ENCODE measurements at regions of chr9 and their contacts with region 1.

Region 1: DNA sequence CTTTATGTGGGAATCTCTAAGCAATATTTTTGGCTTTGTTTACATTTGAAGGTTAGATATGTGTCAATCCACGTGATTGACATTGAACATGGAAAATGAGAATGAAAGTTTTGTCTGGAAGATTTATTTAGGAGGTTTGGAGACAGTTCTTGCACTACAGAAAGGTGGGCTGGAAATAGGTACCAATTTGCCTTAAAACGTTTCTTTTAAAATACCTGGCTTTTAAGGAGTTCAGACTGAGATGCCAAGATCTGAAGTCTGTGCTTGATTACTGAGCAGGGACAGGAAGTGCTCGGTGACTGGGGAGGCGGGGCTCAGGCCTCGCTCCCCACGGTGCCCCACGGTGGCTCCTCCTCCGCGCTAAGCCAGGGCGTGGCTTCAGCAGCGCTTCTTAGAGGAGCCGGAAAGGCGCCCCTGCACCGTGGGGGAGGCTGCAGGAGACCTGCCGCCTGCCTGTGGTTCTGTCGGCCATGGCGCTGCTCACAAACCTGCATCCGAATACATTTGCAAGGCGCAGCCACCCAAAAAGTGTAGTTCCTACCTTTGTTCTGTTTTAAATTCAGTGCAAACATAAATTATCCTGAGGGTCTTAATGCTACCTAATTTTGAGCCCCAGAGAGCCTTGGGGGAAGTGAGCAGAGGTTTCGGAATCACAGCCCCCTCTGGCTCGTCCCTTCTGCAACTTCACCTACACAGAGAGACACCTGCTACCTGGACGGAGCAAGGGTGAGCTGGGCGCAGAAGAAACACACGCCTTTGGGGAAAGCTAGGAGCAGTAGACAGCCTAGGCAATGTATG is 49.2 kb downstream of the USP20 start:
- DNase-seq: peak; percentile 92
- ATAC-seq: peak; percentile 61
- H3K4me3 Mint-ChIP-seq: peak overlapping the region; percentile 84
- H3K27ac Mint-ChIP-seq: peak overlapping the region; percentile 98
- H3K4me1 Mint-ChIP-seq: peaks cover 59% of the 10 kb centered on the region
- H3K27me3 Mint-ChIP-seq: no peaks in the 10 kb centered on the region
- CTCF ChIP-seq: no peak

Region 2: DNA sequence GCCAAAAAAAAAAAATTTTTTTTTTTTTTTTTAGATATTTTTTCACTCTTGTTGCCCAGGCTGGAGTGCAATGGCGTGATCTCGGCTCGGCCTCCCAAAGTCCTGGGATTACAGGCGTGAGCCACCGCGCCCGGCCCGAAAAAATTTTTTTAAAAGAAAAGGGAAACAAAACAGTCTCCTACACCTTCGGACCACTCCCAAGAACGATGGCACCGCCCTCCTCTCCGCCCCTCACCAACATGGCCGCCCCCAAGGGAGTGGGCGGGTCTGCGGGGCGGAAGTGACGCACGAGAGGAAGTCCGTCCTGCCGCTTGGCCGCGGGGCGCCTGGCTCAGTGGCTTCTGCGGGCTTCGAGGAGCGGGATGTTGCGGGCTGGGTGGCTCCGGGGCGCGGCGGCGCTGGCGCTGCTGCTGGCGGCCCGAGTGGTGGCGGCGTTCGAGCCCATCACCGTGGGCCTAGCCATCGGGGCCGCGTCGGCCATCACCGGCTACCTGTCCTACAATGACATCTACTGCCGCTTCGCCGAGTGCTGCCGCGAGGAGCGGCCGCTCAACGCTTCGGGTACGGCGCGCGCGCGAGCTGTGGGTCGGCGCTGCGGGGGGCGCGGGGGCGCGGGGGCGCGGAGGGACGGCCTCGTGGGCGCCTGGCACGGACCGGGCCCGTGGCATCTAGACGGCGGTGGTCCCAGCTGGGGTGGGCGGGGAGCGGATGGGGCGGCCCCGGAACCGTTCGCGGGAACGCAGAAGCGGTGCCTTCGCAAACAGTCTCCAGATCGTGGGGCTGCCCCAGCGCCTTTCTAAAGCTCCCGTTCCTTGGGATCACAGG is 81.4 kb before region 1 on chr9 and contains the start of gene TOR1B:
- CTCF ChIA-PET with region 1: no interaction called
- POLR2A ChIA-PET with region 1: interaction called, 4 read pairs
- intact Hi-C with region 1: loop called (anchors 1 kb)
- DNase-seq: peak; percentile 99
- ATAC-seq: peak; percentile 95
- H3K4me3 Mint-ChIP-seq: peak within 1 kb of the TSS; percentile 92
- H3K27ac Mint-ChIP-seq: peak within 1 kb of the TSS; percentile 93
- H3K4me1 Mint-ChIP-seq: peaks cover 22% of the 10 kb centered on the region
- H3K27me3 Mint-ChIP-seq: no peaks in the 10 kb centered on the region
- CTCF ChIP-seq: no peak
- total RNA-seq, gene TOR1B: 11.8 and 15.3 TPM in 2 replicates

Region 3: DNA sequence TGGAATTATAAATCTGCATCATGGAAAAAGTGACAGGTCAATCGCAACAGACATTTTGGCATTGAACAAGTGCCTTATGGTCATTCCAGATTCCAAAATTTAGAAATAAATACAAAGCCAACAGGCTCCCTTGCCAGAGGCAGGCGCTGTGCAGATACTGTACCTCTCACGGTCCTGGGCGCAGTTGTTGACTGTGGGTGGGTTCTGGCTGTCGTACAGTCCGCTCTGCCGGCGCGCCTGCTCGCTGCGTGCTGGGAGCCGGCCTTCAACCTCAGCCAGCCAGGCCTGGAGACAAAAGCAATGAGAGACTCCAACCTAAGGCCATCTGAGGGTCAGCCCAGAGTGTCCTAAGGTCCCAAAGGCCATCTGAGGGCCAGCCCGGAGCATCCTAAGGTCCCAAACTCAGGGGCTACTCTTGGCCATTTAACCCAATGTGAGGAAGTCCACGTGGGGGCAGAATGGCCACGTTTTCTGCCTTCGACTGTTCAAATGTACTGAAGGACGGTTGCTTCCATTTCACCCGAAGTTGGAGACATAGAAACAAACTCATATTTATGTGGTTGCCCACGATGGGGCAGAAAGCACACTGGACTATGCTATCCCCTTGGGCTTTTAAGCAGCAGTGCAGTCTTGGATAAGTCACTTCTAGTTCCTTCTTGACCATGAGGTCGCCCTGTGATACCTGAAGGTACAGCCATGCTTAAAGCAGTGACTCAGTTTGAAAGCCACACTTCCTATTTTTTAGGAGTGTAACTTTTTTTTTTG is 16.0 kb after region 1 on chr9:
- CTCF ChIA-PET with region 1: interaction called, 6 read pairs
- POLR2A ChIA-PET with region 1: interaction called, 26 read pairs
- intact Hi-C with region 1: loop called (anchors 1 kb)
- DNase-seq: peak; percentile 17
- ATAC-seq: peak; percentile 95
- H3K4me3 Mint-ChIP-seq: peak overlapping the region; percentile 52
- H3K27ac Mint-ChIP-seq: peak overlapping the region; percentile 82
- H3K4me1 Mint-ChIP-seq: peaks cover 70% of the 10 kb centered on the region
- H3K27me3 Mint-ChIP-seq: no peaks in the 10 kb centered on the region
- CTCF ChIP-seq: no peak

Region 4: DNA sequence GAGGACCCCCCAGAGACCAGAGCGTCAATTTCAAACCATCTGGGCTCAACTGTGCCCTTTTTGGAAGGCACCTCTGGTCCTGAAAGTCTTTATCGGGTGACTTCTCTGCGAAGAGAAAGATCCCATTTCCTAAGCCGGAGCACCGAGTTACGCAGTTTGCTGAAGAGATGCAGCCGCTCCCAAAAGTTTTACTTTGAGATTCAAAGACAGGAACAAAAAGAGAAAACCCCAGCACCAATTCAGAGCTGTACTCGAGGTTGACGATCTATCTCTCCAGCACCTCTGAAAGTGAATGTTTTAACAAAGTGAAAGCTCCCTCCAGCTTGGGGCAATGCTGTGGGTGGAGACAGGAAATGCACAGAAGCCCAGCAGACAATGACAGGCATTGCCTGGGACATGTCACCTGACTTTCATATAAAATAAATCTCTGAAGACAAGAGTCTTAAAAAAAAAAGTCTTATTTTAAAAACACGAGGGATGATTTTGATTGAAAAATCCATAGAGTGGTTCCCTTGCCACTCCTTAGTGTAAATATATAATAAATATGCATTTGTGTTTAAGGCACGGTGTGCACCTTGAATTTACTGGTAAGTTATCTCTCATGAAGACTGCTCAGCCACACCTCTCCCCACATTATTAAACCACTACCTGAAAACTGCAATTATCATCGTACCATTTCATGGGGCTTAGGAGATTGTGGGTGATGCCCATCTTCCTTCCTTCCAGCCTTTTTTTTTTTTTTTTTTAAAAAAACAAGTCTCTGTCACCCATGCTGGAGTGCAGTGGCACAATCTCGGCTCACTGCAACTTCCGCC is 78.7 kb after region 1 on chr9:
- CTCF ChIA-PET with region 1: interaction called, 3 read pairs
- POLR2A ChIA-PET with region 1: interaction called, 6 read pairs
- intact Hi-C with region 1: loop called (anchors 2 kb)
- DNase-seq: no peak
- ATAC-seq: peak; percentile 94
- H3K4me3 Mint-ChIP-seq: peak overlapping the region; percentile 81
- H3K27ac Mint-ChIP-seq: peak overlapping the region; percentile 90
- H3K4me1 Mint-ChIP-seq: peaks cover 67% of the 10 kb centered on the region
- H3K27me3 Mint-ChIP-seq: no peaks in the 10 kb centered on the region
- CTCF ChIP-seq: no peak

Region 5: GRCh38 chr9:130034570-130034969 is 150.2 kb after region 1 on chr9:
- CTCF ChIA-PET with region 1: interaction called, 4 read pairs
- POLR2A ChIA-PET with region 1: interaction called, 109 read pairs
- intact Hi-C with region 1: loop called (anchors 1 kb)
- DNase-seq: no peak
- ATAC-seq: peak; percentile 38
- H3K4me3 Mint-ChIP-seq: peak overlapping the region; percentile 54
- H3K27ac Mint-ChIP-seq: peak overlapping the region; percentile 95
- H3K4me1 Mint-ChIP-seq: peaks cover 97% of the 10 kb centered on the region
- H3K27me3 Mint-ChIP-seq: no peaks in the 10 kb centered on the region
- CTCF ChIP-seq: no peak

Region 6: DNA sequence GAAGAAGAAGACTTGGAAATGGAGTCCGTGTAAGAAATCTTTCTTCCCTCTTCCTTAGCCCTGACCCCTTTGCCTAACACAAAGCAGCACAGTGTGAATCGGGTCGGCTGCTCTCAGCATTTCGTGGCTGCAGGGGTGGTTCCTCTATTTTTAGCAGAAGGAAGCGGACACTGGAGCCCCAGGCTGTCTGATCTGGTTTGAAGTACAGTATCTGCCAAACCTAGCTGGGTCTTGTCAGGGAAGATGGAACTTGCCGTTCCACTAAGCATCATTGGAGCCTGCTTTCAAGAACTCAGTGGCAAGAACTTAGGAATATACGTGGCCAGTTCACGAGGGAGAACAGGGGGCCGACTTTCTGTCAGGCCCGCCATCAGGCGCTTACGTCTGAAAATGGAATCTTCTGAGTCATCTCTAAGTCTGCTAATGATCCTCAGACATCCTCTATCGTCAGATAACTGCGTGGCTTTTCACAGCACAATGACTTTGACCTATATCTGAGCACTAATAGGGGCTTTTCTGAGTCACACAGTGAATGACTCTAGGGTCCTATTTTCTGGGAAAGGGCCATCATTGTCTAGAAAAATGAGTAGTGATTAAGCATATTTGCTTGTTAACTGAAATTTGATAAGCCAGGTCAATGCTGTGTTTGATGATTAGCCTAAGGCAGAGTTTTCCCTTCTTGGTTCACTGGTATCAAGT is 244.5 kb after region 1 on chr9:
- CTCF ChIA-PET with region 1: no interaction called
- POLR2A ChIA-PET with region 1: interaction called, 10 read pairs
- intact Hi-C with region 1: loop called (anchors 1 kb)
- DNase-seq: peak; percentile 50
- ATAC-seq: peak; percentile 79
- H3K4me3 Mint-ChIP-seq: peak overlapping the region; percentile 83
- H3K27ac Mint-ChIP-seq: peak overlapping the region; percentile 99
- H3K4me1 Mint-ChIP-seq: peaks cover 39% of the 10 kb centered on the region
- H3K27me3 Mint-ChIP-seq: no peaks in the 10 kb centered on the region
- CTCF ChIP-seq: no peak

Measured in activated B cell treated with CpG ODN at 0.5 μM for 24 hours (primary cell).